ENCODE measurements at regions of chr1 and their contacts with region 1.

Region 1: DNA sequence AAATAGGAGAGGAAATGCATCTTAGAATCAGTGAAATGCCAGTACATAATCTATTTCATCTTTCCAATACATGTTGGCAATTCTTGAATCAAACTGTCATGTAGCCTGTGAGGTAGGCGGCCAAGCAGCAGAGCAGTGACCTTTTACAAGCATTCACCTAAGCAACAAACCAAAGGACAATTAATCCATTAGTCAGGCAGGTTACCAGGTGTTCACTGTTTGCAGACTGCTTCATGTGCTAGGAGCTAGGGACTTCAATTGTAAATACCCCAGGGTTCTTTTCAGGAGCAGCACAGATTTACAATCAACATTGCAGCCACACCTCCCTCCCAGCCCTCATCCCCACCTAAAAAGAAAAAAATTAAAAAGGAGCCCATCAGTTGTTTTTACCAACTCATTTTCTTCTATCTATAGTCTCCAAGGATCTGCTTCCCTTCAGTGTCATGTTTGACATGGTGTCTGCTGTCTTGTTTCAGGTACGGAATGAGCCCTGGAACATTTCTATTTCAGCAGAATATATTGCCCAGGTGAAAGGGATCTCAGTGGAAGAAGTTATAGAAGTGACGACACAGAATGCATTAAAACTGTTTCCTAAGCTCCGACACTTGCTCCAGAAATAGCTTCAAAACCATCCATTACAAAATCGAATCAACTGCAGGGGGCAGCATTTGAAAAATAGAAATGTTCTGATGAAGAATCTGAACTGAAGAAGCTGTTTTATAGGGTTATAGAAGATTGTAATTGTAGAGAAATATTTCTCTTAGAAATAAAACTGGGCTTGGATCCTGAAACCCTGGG is 23.0 kb downstream of the TATDN3 start:
- DNase-seq: peak; percentile 47
- H3K4me3 Mint-ChIP-seq: no peak overlapping the region
- H3K27ac Mint-ChIP-seq: no peak overlapping the region
- H3K4me1 Mint-ChIP-seq: peaks cover 9% of the 10 kb centered on the region
- H3K27me3 Mint-ChIP-seq: no peaks in the 10 kb centered on the region
- CTCF ChIP-seq: peak; percentile 28

Region 2: GRCh38 chr1:212683357-212683722 is 131.4 kb before region 1 on chr1:
- CTCF ChIA-PET with region 1: no interaction called
- intact Hi-C with region 1: no loop called
- DNase-seq: no peak
- H3K4me3 Mint-ChIP-seq: no peak overlapping the region
- H3K27ac Mint-ChIP-seq: no peak overlapping the region
- H3K4me1 Mint-ChIP-seq: no peaks in the 10 kb centered on the region
- H3K27me3 Mint-ChIP-seq: peaks cover 42% of the 10 kb centered on the region
- CTCF ChIP-seq: no peak

Region 3: GRCh38 chr1:212828395-212828794 is 13.7 kb after region 1 on chr1:
- CTCF ChIA-PET with region 1: interaction called, 18 read pairs
- intact Hi-C with region 1: no loop called
- DNase-seq: no peak
- H3K4me3 Mint-ChIP-seq: no peak overlapping the region
- H3K27ac Mint-ChIP-seq: no peak overlapping the region
- H3K4me1 Mint-ChIP-seq: peaks cover 7% of the 10 kb centered on the region
- H3K27me3 Mint-ChIP-seq: no peaks in the 10 kb centered on the region
- CTCF ChIP-seq: no peak

Region 4: DNA sequence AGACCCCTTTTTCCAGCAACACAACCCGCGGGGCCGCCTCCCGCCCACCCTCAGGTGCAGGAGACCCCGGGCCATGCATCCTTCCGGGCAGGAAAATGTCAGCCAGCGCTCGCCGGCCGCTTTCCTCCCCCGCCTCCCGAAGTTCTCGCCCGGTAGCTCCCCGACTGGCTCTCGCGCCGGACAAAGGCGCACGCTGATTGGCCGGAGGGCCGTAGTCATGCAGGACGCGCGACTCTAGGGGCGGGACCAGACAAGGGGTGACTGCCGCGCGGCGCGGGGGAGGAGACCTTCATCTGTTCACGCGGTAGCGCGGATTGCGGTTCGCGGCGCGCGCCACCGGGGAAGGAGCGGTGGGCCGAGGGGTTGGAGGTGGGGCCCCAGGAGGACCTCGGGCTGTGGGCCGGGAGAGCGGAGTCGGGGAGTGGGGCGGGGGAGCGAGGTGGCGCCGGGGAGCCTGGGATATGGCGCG is 43.3 kb after region 1 on chr1 and contains the start of gene FLVCR1:
- CTCF ChIA-PET with region 1: interaction called, 19 read pairs
- intact Hi-C with region 1: loop called (anchors 2 kb)
- DNase-seq: peak; percentile 99
- H3K4me3 Mint-ChIP-seq: no peak within 1 kb of the TSS
- H3K27ac Mint-ChIP-seq: peak within 1 kb of the TSS; percentile 82
- H3K4me1 Mint-ChIP-seq: peaks cover 25% of the 10 kb centered on the region
- H3K27me3 Mint-ChIP-seq: no peaks in the 10 kb centered on the region
- CTCF ChIP-seq: no peak
- total RNA-seq, gene FLVCR1: 26.0 and 27.2 TPM in 2 replicates

Region 5: GRCh38 chr1:212915245-212916091 is 100.7 kb after region 1 on chr1:
- CTCF ChIA-PET with region 1: interaction called, 8 read pairs
- intact Hi-C with region 1: loop called (anchors 1 kb)
- DNase-seq: peak; percentile 55
- H3K4me3 Mint-ChIP-seq: no peak overlapping the region
- H3K27ac Mint-ChIP-seq: peak overlapping the region; percentile 53
- H3K4me1 Mint-ChIP-seq: peaks cover 23% of the 10 kb centered on the region
- H3K27me3 Mint-ChIP-seq: peaks cover 13% of the 10 kb centered on the region
- CTCF ChIP-seq: peak; percentile 74

Region 6: DNA sequence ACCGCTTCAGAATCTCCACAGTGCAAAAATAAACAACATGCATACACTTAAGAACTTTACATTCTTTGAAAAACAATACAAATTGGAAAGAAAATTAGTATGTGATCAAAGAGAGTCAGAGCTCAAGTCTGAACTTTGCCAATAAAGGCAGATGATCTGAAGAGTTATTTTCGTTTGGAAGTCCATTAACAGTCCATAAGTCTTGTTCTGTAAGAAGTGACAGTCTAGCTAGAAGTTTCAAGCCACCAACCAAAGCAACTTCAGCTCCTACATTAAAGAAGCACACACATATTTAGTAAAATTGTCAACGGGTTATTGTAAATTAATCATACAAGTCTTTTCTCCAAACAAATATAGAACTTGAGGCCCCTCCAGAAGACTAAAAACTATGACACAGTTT is 180.2 kb after region 1 on chr1:
- CTCF ChIA-PET with region 1: interaction called, 9 read pairs
- intact Hi-C with region 1: loop called (anchors 1 kb)
- DNase-seq: no peak
- H3K4me3 Mint-ChIP-seq: no peak overlapping the region
- H3K27ac Mint-ChIP-seq: no peak overlapping the region
- H3K4me1 Mint-ChIP-seq: no peaks in the 10 kb centered on the region
- H3K27me3 Mint-ChIP-seq: no peaks in the 10 kb centered on the region
- CTCF ChIP-seq: no peak

Region 7: GRCh38 chr1:213014642-213015041 is 199.9 kb after region 1 on chr1:
- CTCF ChIA-PET with region 1: no interaction called
- intact Hi-C with region 1: loop called (anchors 5 kb)
- DNase-seq: no peak
- H3K4me3 Mint-ChIP-seq: peak overlapping the region; percentile 91
- H3K27ac Mint-ChIP-seq: peak overlapping the region; percentile 58
- H3K4me1 Mint-ChIP-seq: peaks cover 6% of the 10 kb centered on the region
- H3K27me3 Mint-ChIP-seq: no peaks in the 10 kb centered on the region
- CTCF ChIP-seq: no peak